PC-3 (cell line): ENCODE measurements at regions of chr15 and their contacts with region 1.

Region 1: GRCh38 chr15:39125904-39126303 is 455.0 kb upstream of the THBS1 start:
- DNase-seq: peak; percentile 78
- ATAC-seq: no peak
- H3K4me3 ChIP-seq: no peak overlapping the region
- H3K27ac ChIP-seq: peak overlapping the region; percentile 88
- H3K4me1 ChIP-seq: peaks cover 70% of the 10 kb centered on the region
- H3K27me3 ChIP-seq: no peaks in the 10 kb centered on the region
- CTCF ChIP-seq: peak; percentile 76

Region 2: DNA sequence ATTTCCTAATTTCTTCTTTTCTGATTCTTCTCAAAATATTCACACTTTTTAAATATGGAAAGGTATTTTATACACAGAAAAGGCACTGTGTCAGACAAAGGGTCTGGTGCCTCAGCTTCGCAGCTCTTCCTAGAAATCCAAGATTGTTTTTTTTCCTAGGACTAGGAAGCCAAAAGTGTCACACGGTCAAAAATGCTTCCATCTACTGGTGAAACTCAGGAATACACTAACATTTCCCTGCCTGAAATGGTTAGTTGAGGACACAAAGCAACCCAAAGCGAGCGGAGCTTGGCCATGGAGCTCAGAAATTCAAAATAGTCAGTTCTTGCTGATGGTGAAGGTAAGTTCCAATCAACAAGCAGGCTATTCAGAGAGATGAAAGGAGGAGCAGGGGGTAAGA is 134.8 kb before region 1 on chr15:
- CTCF ChIA-PET with region 1: no interaction called
- POLR2A ChIA-PET with region 1: no interaction called
- intact Hi-C with region 1: loop called (anchors 10 kb)
- DNase-seq: peak; percentile 58
- ATAC-seq: no peak
- H3K4me3 ChIP-seq: no peak overlapping the region
- H3K27ac ChIP-seq: no peak overlapping the region
- H3K4me1 ChIP-seq: peaks cover 9% of the 10 kb centered on the region
- H3K27me3 ChIP-seq: no peaks in the 10 kb centered on the region
- CTCF ChIP-seq: peak; percentile 72

Region 3: DNA sequence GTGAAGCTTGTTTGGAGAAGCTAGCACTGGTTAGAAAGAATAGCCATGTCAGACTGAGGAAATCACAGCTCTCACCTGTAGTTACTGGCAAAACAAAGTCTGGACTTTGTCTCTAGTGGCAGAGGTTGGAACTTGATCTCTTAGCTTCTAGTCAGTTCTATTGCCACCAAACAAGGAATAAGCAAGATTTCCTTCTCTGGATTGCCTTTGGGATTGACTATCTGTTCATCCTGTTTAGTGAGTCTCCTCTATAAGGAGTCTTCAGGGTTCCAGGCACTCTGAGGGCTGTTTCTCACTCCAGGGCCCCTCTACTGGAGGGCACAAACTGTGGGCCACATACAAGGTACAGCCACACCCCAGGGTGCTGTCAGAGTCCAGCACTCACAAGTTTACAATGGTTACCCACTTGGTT is 28.3 kb after region 1 on chr15:
- CTCF ChIA-PET with region 1: interaction called, 6 read pairs
- POLR2A ChIA-PET with region 1: no interaction called
- intact Hi-C with region 1: loop called (anchors 1 kb)
- DNase-seq: peak; percentile 45
- ATAC-seq: peak; percentile 39
- H3K4me3 ChIP-seq: peak overlapping the region; percentile 38; the same call in 1 of the 2 replicates
- H3K27ac ChIP-seq: peak overlapping the region; percentile 54
- H3K4me1 ChIP-seq: peaks cover 29% of the 10 kb centered on the region
- H3K27me3 ChIP-seq: no peaks in the 10 kb centered on the region
- CTCF ChIP-seq: peak; percentile 43; the same call in 1 of the 2 replicates